ENCODE measurements at regions of chr3 and their contacts with region 1.

Region 1: GRCh38 chr3:197590313-197590962 is 34.7 kb upstream of the BDH1 start:
- H3K4me3 ChIP-seq: no peak overlapping the region
- H3K27ac ChIP-seq: no peak overlapping the region
- H3K4me1 ChIP-seq: no peaks in the 10 kb centered on the region
- CTCF ChIP-seq: no peak

Region 2: DNA sequence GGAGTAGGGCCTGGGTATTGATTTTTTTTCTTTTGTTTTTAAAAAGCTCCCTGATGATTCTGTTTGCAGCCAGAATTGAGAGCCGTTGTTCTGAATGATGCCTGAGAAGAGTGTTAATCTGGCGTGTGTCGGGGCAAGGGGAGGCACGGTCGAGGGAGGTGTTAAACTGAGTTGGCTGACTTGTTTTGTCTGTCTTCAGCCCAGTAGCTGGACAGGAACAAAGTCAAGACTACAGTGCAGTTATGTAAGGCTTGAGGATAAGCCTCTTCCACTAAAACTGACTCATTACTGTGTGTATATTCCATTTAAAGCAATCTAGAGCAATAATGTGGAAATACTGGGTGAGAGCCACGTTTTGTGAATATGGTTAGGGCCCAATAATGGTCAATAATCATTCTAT is 173.0 kb before region 1 on chr3:
- CTCF ChIA-PET with region 1: no interaction called
- POLR2A ChIA-PET with region 1: no interaction called
- H3K4me3 ChIP-seq: no peak overlapping the region
- H3K27ac ChIP-seq: no peak overlapping the region
- H3K4me1 ChIP-seq: no peaks in the 10 kb centered on the region
- CTCF ChIP-seq: no peak

Region 3: GRCh38 chr3:197564097-197564843 is 26.2 kb before region 1 on chr3:
- CTCF ChIA-PET with region 1: interaction called, 10 read pairs
- POLR2A ChIA-PET with region 1: no interaction called
- H3K4me3 ChIP-seq: no peak overlapping the region
- H3K27ac ChIP-seq: no peak overlapping the region
- H3K4me1 ChIP-seq: no peaks in the 10 kb centered on the region
- CTCF ChIP-seq: no peak

Measured in HEK293 (cell line).